ENCODE measurements at regions of chr16 and their contacts with region 1.

Region 1: GRCh38 chr16:2358811-2359210 is 18.3 kb upstream of the ABCA3 start:
- DNase-seq: no peak
- H3K4me3 ChIP-seq: no peak overlapping the region
- H3K27ac ChIP-seq: no peak overlapping the region
- H3K4me1 ChIP-seq: no peaks in the 10 kb centered on the region
- H3K27me3 ChIP-seq: no peaks in the 10 kb centered on the region
- CTCF ChIP-seq: no peak

Region 2: DNA sequence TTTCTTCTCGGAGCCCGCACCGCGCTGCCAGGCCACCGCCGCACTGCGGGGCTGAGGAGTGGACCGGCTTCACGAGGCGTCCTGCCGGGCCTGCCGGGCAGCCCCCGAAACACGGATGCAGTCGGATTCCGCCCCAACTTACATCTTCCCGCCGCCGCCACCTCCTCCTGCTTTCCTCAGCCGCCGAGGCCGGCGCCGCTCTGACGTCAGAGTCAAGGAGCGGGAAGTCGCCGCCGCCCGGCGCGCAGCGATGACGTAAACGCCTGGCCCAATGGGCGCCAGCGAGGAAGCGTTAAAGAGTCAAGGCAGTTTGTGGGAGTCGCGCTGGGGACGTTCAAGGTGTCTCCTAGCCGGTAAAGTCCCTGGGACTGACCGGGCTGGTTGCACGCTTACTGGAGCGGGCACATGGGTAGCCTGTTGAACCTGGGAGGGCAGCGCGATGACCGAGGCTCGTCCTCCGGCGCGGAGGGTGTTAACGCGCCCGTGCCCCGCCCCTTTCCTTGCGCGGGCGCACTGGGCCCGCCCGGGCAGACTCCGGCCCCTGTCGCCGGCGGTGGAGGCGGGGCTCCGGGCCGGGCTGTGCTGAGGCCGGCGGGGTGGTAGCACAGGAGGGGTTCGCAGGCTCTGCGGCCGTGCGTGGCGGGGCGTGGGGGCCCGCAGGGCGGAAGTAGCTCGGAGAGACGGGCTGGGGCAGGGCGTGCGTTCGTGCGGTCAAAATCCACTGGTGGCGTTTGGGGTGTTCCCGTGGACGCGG is 90.7 kb before region 1 on chr16 and contains the start of gene RNPS1:
- CTCF ChIA-PET with region 1: interaction called, 10 read pairs
- dilution Hi-C with region 1: no loop called
- in situ Hi-C with region 1: no loop called
- intact Hi-C with region 1: no loop called
- DNase-seq: peak; percentile 95
- H3K4me3 ChIP-seq: peak within 1 kb of the TSS; percentile 63 to 90 (median 79)
- H3K27ac ChIP-seq: peak within 1 kb of the TSS; percentile 74
- H3K4me1 ChIP-seq: peaks cover 18% of the 10 kb centered on the region
- H3K27me3 ChIP-seq: no peaks in the 10 kb centered on the region
- CTCF ChIP-seq: no peak
- total RNA-seq, gene RNPS1: 79.4 to 207 TPM

Region 3: GRCh38 chr16:2388875-2389433 is 30.1 kb after region 1 on chr16:
- CTCF ChIA-PET with region 1: no interaction called
- dilution Hi-C with region 1: no loop called
- in situ Hi-C with region 1: no loop called
- intact Hi-C with region 1: loop called (anchors 2 kb)
- DNase-seq: peak; percentile 76
- H3K4me3 ChIP-seq: no peak overlapping the region
- H3K27ac ChIP-seq: no peak overlapping the region
- H3K4me1 ChIP-seq: peaks cover 9% of the 10 kb centered on the region
- H3K27me3 ChIP-seq: no peaks in the 10 kb centered on the region
- CTCF ChIP-seq: no peak

Measured in mammary epithelial cell (primary cell).